Dorsolateral prefrontal cortex (tissue), 120 donors: ENCODE measurements at regions of chr17 and their contacts with region 1.

Region 1: GRCh38 chr17:66459811-66460270 is 157.4 kb downstream of the PRKCA start:
- DNase-seq: peak in 1 of 10 donors; percentile 34
- H3K4me3 ChIP-seq: no peak overlapping the region
- H3K27ac ChIP-seq: peak overlapping the region in 21 of 59 donors; percentile 2 to 73 (median 27)
- H3K27me3 ChIP-seq: no peaks in the 10 kb centered on the region
- CTCF ChIP-seq: no peak

Region 2: DNA sequence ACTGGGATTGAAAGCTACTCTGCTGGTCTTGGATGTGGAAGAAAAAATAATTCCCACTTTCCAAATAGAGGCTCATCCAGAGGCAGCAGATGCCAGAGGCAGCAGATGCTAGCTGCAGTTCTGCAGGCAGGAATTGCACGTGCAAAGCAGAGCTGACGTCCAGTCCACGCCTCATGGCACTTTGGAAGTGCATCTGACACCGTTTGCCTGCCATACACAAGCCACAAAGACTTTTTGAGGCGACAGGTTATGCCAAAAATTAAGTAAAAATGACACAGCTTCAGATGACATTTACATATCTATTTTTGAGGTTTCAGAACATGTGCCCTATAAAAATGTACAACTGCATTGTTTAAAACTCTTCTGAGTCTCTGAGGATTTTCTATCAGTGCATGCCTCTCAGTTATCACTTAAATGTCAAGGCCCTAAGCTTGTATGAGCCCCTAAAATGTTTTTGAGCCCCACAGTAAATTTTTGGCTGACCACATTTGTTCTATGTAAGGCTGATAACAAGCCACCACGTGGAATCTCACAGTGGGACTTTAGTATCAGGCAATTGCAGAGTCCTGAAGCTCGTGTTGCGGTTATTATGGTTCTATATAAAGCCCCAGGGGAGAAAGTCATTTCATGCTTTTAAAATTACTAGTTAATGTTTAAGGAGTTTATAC is 81.8 kb after region 1 on chr17:
- intact Hi-C with region 1: loop called in 1 of 2 experiments (anchors 10 kb)
- DNase-seq: peak in 3 of 10 donors; percentile 52 to 61 (median 56)
- H3K4me3 ChIP-seq: peak overlapping the region in 4 of 59 donors; percentile 18 to 47 (median 28)
- H3K27ac ChIP-seq: peak overlapping the region; percentile 83 to 98 (median 95)
- H3K27me3 ChIP-seq: no peaks in the 10 kb centered on the region
- CTCF ChIP-seq: no peak